SK-N-SH (cell line): ENCODE measurements at regions of chr1 and their contacts with region 1.

Region 1: GRCh38 chr1:156728597-156729462 is at the start of gene ISG20L2:
- DNase-seq: peak; percentile 92
- H3K4me3 ChIP-seq: peak within 1 kb of the TSS; percentile 76 to 87
- H3K27ac ChIP-seq: peak within 1 kb of the TSS; percentile 83 to 88
- H3K4me1 ChIP-seq: peaks cover 28 to 56% of the 10 kb centered on the region in 2 experiments
- H3K27me3 ChIP-seq: no peaks in the 10 kb centered on the region
- CTCF ChIP-seq: no peak
- EP300 ChIP-seq: no peak
- RAD21 ChIP-seq: no peak
- polyA plus RNA-seq, gene ISG20L2: 31.6 and 44.3 TPM in 2 replicates

Region 2: DNA sequence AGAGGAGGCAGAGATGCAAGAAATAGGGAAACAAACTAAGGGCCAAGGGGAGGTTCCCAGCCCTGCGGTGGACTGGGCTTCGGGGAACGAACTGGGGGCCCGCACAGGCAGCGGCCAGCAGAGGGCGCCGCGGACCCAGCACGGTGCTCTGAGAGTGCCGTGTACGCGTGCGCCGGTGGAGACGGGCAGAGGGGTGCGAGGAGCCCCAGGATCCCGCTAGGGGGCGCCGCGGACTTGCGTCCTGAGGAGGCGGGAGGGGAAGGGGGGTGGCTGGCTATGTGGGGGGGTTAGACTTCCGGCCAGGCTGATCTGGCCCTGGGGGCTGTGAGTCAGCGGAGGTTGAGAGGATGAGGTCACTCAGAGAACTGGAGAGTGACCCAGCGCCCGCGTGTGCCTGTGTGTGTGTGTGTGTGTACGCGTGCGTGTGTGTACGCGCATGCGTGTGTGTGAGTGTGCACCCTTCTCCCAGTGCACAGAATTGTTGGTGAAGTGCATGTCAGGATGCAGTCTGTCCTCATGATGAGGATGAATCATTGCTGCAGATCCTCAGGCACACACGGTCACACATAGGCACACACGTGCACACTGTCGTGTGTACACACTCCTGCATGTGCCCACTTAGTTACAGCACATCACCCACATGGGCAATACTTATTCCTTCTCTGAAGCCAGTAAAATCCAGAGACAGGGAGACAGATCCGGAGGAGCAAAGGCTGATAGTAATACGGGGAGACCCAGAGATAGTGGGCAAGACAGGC is 68.7 kb before region 1 on chr1:
- CTCF ChIA-PET with region 1: interaction called, 51 read pairs
- POLR2A ChIA-PET with region 1: no interaction called
- DNase-seq: peak; percentile 99
- H3K4me3 ChIP-seq: peak overlapping the region; percentile 34 to 54; a peak in 2 of 4 replicates
- H3K27ac ChIP-seq: peak overlapping the region; percentile 72 to 87
- H3K4me1 ChIP-seq: peaks cover 44 to 48% of the 10 kb centered on the region in 2 experiments; a peak in 3 of 4 replicates
- H3K27me3 ChIP-seq: no peaks in the 10 kb centered on the region
- CTCF ChIP-seq: peak; percentile 99
- EP300 ChIP-seq: peak in 1 of 2 experiments; percentile 37; a peak in 1 of 4 replicates
- RAD21 ChIP-seq: peak; percentile 90

Region 3: GRCh38 chr1:156746728-156747631 is 18.1 kb after region 1 on chr1:
- CTCF ChIA-PET with region 1: interaction called, 30 read pairs
- POLR2A ChIA-PET with region 1: interaction called, 14 read pairs
- DNase-seq: peak; percentile 91
- H3K4me3 ChIP-seq: peak overlapping the region; percentile 78 to 98
- H3K27ac ChIP-seq: peak overlapping the region; percentile 100
- H3K4me1 ChIP-seq: peaks cover 37 to 48% of the 10 kb centered on the region in 2 experiments
- H3K27me3 ChIP-seq: no peaks in the 10 kb centered on the region
- CTCF ChIP-seq: peak; percentile 46
- EP300 ChIP-seq: peak; percentile 14 to 34; a peak in 1 of 4 replicates
- RAD21 ChIP-seq: no peak

Region 4: DNA sequence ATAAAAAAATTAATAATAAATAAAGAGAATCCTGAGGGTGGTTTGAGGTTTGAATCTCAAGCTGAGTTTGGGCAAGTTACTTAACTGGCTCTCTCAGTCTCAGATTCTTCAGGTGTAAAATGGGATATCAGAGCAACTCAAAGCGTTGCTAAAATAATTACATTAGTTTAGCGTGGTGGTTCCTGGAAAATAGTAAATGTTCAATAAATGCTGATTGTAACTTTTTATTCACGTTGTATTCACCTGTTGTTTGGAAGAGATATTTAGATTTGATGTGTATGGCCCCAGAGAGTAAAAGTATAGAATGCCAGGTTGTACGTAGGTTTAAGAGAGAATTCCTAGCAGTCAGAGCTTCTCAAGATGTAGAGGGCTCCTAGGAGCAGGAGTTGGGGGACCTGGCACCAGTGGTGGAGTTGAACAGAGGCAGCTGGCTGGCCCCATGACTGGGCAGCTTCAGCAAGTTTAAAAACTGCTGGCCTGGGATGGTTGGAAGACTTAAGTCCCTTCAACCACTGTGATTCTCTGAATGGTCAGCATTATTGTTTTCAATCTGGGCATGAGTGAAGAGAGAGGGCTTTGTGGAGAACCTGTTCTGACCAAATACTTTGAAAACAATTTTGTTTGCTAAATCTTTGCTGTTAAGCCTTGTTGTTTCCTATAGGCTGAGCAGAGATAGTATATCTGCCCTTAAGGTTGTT is 60.9 kb after region 1 on chr1:
- CTCF ChIA-PET with region 1: interaction called, 77 read pairs
- POLR2A ChIA-PET with region 1: no interaction called
- DNase-seq: no peak
- H3K4me3 ChIP-seq: no peak overlapping the region
- H3K27ac ChIP-seq: no peak overlapping the region
- H3K4me1 ChIP-seq: no peaks in the 10 kb centered on the region; a peak in 1 of 4 replicates
- H3K27me3 ChIP-seq: no peaks in the 10 kb centered on the region
- CTCF ChIP-seq: no peak
- EP300 ChIP-seq: no peak
- RAD21 ChIP-seq: no peak

Region 5: GRCh38 chr1:156866249-156866909 is 137.5 kb after region 1 on chr1:
- CTCF ChIA-PET with region 1: interaction called, 104 read pairs
- POLR2A ChIA-PET with region 1: interaction called, 4 read pairs
- DNase-seq: no peak
- H3K4me3 ChIP-seq: no peak overlapping the region
- H3K27ac ChIP-seq: no peak overlapping the region
- H3K4me1 ChIP-seq: peaks cover 8 to 27% of the 10 kb centered on the region in 2 experiments; a peak in 2 of 4 replicates
- H3K27me3 ChIP-seq: peaks cover 11% of the 10 kb centered on the region; the same call in 1 of the 2 replicates
- CTCF ChIP-seq: no peak
- EP300 ChIP-seq: no peak
- RAD21 ChIP-seq: no peak